ENCODE measurements at regions of chr11 and their contacts with region 1.

Region 1: DNA sequence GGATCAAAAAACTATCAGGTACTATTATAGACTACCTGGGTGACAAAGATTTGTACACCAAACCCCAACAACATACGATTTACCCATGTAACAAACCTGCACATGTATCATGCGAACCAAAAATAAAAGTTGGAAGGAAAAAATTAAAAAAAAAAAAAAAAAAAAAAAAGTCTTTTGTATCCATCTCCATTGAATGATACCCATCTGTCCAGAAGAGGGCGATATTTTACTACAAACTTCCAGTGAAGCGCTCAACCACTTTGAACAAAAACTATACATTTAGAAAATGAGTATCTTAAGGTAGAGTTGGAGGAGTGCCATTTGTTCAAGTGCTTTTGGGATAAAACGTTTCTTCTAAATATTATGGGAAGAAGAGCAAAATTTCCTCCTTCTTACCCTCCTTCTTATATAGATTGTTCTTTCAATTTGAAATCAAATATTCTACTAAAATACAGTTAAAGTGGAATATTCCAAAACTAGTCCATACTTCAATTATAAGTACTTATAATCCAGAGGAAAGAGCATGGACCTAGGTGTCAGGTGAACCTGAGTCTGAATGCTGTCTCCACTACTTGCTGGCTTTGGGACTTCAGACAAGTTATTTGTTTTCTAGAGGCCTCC is 23.3 kb downstream of the ARL14EP start:
- DNase-seq: no peak
- ATAC-seq: no peak
- H3K4me3 ChIP-seq: no peak overlapping the region
- H3K27ac ChIP-seq: no peak overlapping the region
- H3K4me1 ChIP-seq: no peaks in the 10 kb centered on the region
- H3K27me3 ChIP-seq: no peaks in the 10 kb centered on the region

Region 2: GRCh38 chr11:30225642-30226041 is 120.5 kb before region 1 on chr11:
- intact Hi-C with region 1: no loop called
- DNase-seq: no peak
- ATAC-seq: no peak
- H3K4me3 ChIP-seq: no peak overlapping the region
- H3K27ac ChIP-seq: no peak overlapping the region
- H3K4me1 ChIP-seq: no peaks in the 10 kb centered on the region
- H3K27me3 ChIP-seq: no peaks in the 10 kb centered on the region

Region 3: GRCh38 chr11:30653606-30654005 is 307.4 kb after region 1 on chr11:
- intact Hi-C with region 1: loop called in 1 of 4 experiments (anchors 10 kb)
- DNase-seq: no peak
- ATAC-seq: no peak
- H3K4me3 ChIP-seq: no peak overlapping the region
- H3K27ac ChIP-seq: no peak overlapping the region
- H3K4me1 ChIP-seq: no peaks in the 10 kb centered on the region
- H3K27me3 ChIP-seq: no peaks in the 10 kb centered on the region

Region 4: GRCh38 chr11:30855383-30856006 is 509.3 kb after region 1 on chr11:
- intact Hi-C with region 1: loop called (anchors 5 kb)
- DNase-seq: no peak
- ATAC-seq: no peak
- H3K4me3 ChIP-seq: no peak overlapping the region
- H3K27ac ChIP-seq: no peak overlapping the region
- H3K4me1 ChIP-seq: no peaks in the 10 kb centered on the region
- H3K27me3 ChIP-seq: no peaks in the 10 kb centered on the region